Activated CD4-positive, alpha-beta T cell treated with anti-CD3 and anti-CD28 coated beads, Interleukin-2, amount 10 ng/mL, durations not matched to agents 24 days and 14 days (primary cell): ENCODE measurements at regions of chr7 and their contacts with region 1.

Region 1: GRCh38 chr7:22001345-22002004 is 55.8 kb upstream of the CDCA7L start:
- DNase-seq: peak; percentile 83
- H3K4me3 Mint-ChIP-seq: peak overlapping the region; percentile 29
- H3K27ac Mint-ChIP-seq: no peak overlapping the region
- H3K4me1 Mint-ChIP-seq: peaks cover 2% of the 10 kb centered on the region
- H3K27me3 Mint-ChIP-seq: peaks cover 13% of the 10 kb centered on the region

Region 2: DNA sequence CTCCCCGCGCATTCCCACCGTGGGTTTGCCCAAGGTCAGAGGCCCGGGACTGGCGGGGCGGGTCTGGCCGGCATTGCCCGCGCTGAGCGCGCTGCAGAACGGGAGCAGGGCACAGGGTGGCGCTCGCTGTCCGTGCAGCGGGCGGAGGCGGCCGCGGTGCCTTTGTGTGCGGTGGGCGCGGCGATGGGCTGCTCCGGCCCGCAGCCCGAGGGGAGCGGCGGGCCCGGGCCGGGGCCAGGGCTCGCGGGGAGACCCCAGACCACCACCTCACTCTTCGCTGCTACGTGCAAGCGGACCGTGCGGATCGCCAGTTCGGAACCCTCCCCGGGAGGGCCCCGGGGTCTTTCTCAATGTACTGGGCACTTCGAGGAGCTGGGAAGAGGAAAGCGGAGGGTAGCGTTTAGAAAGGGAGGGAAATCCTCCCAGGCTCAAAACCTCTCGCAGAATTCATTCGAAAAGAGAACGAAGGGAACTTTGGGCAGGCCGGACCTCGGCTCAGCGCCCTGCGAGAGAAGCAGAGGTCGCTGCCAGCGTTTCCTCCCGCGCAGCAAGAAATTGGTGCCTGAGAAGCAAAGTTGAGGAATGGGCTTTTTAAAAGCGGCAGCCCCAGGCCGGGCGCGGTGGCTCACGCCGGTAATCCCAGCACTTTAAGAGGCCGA is 1223.3 kb before region 1 on chr7:
- intact Hi-C with region 1: loop called (anchors 10 kb)
- DNase-seq: peak; percentile 66
- H3K4me3 Mint-ChIP-seq: no peak overlapping the region
- H3K27ac Mint-ChIP-seq: no peak overlapping the region
- H3K4me1 Mint-ChIP-seq: peaks cover 4% of the 10 kb centered on the region
- H3K27me3 Mint-ChIP-seq: peaks cover 76% of the 10 kb centered on the region

Region 3: DNA sequence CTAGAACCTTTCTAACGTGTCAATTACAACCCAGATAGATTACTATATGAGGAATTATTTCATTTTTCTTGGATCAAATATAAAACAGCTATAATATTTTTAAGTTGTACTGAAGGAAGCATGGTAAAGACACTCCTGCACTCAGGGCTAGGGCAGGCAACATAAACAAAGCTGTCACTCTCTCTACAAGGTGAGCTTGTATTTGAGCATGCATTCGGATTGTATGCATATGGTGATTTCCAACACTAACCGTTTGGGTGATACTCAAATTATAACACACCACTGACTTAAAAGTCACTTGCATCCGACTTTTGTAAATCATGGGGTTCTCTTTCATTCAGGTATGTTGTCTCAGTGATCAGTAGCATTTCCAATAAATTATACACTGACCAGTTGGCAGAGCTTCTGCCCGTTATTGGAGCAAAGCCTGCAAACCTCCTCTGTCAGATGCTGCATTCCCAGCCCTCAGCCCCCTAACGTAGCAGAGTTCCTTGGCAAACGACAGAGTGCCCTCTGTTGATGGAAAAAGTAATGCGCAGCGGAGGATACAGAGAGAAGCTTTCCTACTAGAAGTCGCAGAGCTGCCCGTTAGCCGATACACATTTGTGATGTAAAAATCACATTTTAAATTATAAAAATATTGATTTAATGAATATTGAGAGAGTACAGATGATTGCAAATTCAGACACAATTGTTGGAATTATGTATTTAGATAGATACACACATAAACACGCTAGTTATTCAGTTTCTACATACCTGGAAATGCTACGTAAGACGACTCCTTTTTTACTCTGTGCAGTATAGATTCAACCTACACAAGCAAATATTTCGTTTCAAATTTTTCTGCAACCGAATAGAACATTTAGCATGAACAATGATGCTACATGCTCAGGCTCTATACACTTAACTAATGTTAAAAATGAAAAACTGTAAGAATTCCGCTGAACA is 747.5 kb before region 1 on chr7:
- intact Hi-C with region 1: loop called (anchors 5 kb)
- DNase-seq: peak; percentile 84
- H3K4me3 Mint-ChIP-seq: peak overlapping the region; percentile 73
- H3K27ac Mint-ChIP-seq: no peak overlapping the region
- H3K4me1 Mint-ChIP-seq: peaks cover 9% of the 10 kb centered on the region
- H3K27me3 Mint-ChIP-seq: peaks cover 56% of the 10 kb centered on the region

Region 4: GRCh38 chr7:21767300-21767900 is 234.1 kb before region 1 on chr7:
- intact Hi-C with region 1: loop called (anchors 1 kb)
- DNase-seq: peak; percentile 79
- H3K4me3 Mint-ChIP-seq: no peak overlapping the region
- H3K27ac Mint-ChIP-seq: no peak overlapping the region
- H3K4me1 Mint-ChIP-seq: peaks cover 18% of the 10 kb centered on the region
- H3K27me3 Mint-ChIP-seq: peaks cover 14% of the 10 kb centered on the region

Region 5: DNA sequence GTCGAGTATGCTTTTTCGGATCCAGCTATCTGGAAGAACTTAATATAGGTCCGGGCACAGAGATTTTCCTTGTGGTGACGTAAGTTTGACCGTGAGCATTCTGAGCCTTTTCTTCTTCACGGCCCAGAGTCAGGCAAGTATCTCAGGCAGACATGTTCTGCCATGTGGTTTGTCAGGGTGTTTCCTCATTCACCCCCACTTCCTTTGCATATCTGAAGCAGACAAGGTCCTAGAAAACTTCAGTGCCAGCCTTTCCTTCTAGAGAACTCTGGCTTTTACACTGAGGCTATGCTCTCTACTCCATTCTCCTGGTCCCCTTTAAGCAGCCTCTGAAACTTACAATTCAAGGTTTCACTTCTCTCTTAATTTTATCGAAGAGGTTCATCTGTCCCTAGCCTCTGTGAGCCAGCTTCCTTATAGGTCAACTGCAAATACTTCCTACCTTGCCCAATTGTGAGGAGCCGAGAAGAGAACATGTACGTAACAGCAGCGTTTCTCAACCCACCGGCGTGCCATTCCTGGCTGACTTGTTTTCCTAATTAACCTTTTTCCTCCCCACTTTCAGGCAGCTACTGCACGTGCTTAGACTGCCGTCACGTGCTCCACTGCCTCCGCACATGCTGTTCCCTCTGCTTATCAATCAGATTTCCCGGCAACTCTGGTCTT is 103.1 kb before region 1 on chr7:
- intact Hi-C with region 1: loop called (anchors 5 kb)
- DNase-seq: peak; percentile 74
- H3K4me3 Mint-ChIP-seq: peak overlapping the region; percentile 77
- H3K27ac Mint-ChIP-seq: peak overlapping the region; percentile 91
- H3K4me1 Mint-ChIP-seq: peaks cover 20% of the 10 kb centered on the region
- H3K27me3 Mint-ChIP-seq: no peaks in the 10 kb centered on the region

Region 6: GRCh38 chr7:21945454-21946227 is 55.8 kb before region 1 on chr7 and contains the start of gene CDCA7L:
- intact Hi-C with region 1: loop called (anchors 2 kb)
- DNase-seq: peak; percentile 90
- H3K4me3 Mint-ChIP-seq: peak within 1 kb of the TSS; percentile 96
- H3K27ac Mint-ChIP-seq: peak within 1 kb of the TSS; percentile 95
- H3K4me1 Mint-ChIP-seq: peaks cover 60% of the 10 kb centered on the region
- H3K27me3 Mint-ChIP-seq: peaks cover 16% of the 10 kb centered on the region
- total RNA-seq, gene CDCA7L: 111 and 114 TPM in 2 replicates

Region 7: DNA sequence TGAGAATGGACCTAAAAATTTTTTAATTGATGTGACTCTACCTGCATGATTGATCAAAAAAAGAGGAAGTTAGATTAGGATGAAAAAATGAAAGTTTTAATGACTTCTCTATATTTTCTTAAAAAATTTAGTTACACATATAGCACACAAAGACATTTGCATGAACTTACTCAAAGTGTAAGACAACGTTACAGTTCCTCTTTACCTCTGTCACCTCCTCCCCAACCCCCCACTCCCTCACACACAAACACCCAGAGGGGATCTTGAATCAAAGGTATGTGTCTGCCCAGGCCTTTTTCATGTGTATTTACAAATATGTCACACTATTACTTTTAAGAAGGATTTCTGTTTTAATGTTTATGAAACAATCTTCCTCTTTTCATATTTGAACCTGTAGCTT is 35.2 kb before region 1 on chr7:
- intact Hi-C with region 1: no loop called
- DNase-seq: no peak
- H3K4me3 Mint-ChIP-seq: no peak overlapping the region
- H3K27ac Mint-ChIP-seq: no peak overlapping the region
- H3K4me1 Mint-ChIP-seq: peaks cover 4% of the 10 kb centered on the region
- H3K27me3 Mint-ChIP-seq: peaks cover 4% of the 10 kb centered on the region

Region 8: DNA sequence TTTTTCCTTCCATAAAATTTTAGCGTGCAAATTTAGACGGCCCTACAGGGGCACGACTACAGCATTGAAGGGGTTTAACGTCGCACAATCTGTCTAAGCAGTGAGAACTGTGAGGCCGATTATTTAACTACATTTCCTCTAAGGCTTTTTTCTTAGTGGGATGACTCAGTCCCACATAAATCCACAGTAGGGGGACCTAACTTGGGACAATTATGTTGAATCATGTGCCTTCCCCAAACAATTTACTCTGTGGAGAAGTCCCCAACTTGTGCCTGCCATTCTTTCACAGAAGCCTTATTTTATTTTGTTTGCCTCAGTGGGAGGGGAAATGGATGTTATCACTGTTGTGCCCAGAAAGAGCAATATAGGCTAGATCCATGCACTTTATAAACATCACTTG is 24.5 kb after region 1 on chr7:
- intact Hi-C with region 1: no loop called
- DNase-seq: no peak
- H3K4me3 Mint-ChIP-seq: no peak overlapping the region
- H3K27ac Mint-ChIP-seq: no peak overlapping the region
- H3K4me1 Mint-ChIP-seq: no peaks in the 10 kb centered on the region
- H3K27me3 Mint-ChIP-seq: peaks cover 4% of the 10 kb centered on the region